ENCODE measurements at regions of chr3 and their contacts with region 1.

Region 1: GRCh38 chr3:185176750-185177359 is 24.0 kb upstream of the C3orf70 start:
- DNase-seq: peak in 1 of 3 donors; percentile 67
- ATAC-seq: no peak
- H3K4me3 ChIP-seq: no peak overlapping the region
- H3K4me1 ChIP-seq: peaks cover 7% of the 10 kb centered on the region
- CTCF ChIP-seq: peak; percentile 50

Region 2: DNA sequence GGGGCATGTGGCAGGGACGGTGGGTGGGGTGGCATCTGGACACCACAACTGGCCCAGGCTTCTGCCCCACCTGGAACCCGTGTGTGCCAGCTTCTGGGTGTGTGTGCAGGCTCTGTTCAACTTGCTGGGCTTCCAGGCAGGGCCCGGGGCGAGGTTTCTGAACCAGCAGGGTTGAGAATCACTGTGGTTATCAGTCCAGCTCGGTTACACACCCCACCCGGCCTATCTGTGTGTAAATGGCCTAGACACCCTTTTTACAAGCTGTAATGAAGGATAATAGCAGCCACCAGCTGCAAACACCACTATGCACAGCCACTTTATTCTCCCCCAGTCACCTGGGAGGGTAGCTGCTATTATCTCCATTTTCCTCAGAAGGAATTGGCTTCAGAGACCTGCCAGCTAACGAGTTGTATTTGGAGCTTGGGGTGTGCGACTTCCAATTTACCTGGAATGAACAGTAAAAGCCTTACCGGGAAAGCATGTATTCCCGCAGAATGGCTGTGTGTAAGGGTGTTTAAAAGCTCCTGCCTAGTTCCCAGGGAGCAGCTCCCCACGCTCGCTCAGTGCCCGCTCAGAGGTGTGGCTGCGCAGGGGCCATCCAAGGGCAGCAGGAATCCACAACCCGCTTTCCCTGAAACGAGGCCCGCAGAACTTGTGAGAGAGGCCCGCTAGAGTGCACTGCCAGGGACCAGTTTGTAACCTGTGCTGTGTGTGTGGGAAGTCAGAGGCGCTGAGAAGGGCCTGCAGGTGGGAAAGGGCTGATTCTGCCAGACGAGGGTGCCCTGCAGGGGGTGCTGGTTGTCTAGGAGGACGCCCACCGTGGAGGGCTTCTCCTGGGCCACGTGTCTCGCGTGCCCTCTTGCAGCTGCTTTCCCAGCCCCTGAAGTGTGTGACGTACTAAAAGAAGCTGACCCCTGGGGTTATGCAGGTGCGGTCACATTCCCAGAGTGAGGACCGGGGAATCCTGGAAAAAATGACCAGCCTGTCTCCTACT is 107.5 kb before region 1 on chr3:
- intact Hi-C with region 1: loop called in 1 of 2 experiments (anchors 10 kb)
- DNase-seq: peak; percentile 82 to 89 (median 83)
- ATAC-seq: peak; percentile 85
- H3K4me3 ChIP-seq: no peak overlapping the region
- H3K4me1 ChIP-seq: peaks cover 19% of the 10 kb centered on the region
- CTCF ChIP-seq: no peak

Measured in mucosa of descending colon (tissue), 3 donors.